Activated T-helper 1 cell treated with anti-CD3 and anti-CD28 coated beads, Interleukin-12 subunit alpha, Interleukin-12 subunit beta, Interleukin-2, Interleukin-4 antibody, amounts not matched to agents 30 ng/mL and 10 ng/mL and 1 ng/mL, durations not matched to agents 14 hours and 24 hours and 36 hours (primary cell): ENCODE measurements at regions of chr2 and their contacts with region 1.

Region 1: GRCh38 chr2:43595603-43596412 is at the start of gene THADA:
- DNase-seq: peak; percentile 97
- H3K4me3 Mint-ChIP-seq: peak within 1 kb of the TSS; percentile 96
- H3K27ac Mint-ChIP-seq: peak within 1 kb of the TSS; percentile 98
- H3K4me1 Mint-ChIP-seq: peaks cover 42% of the 10 kb centered on the region
- H3K27me3 Mint-ChIP-seq: peaks cover 2% of the 10 kb centered on the region
- total RNA-seq, gene THADA: 49.8 and 51.7 TPM in 2 replicates

Region 2: GRCh38 chr2:43293744-43294695 is 301.8 kb before region 1 on chr2:
- intact Hi-C with region 1: loop called (anchors 5 kb)
- DNase-seq: peak; percentile 66
- H3K4me3 Mint-ChIP-seq: peak overlapping the region; percentile 35
- H3K27ac Mint-ChIP-seq: peak overlapping the region; percentile 77
- H3K4me1 Mint-ChIP-seq: peaks cover 34% of the 10 kb centered on the region
- H3K27me3 Mint-ChIP-seq: no peaks in the 10 kb centered on the region

Region 3: GRCh38 chr2:43569921-43570320 is 25.9 kb before region 1 on chr2:
- intact Hi-C with region 1: loop called (anchors 2 kb)
- DNase-seq: no peak
- H3K4me3 Mint-ChIP-seq: peak overlapping the region; percentile 67
- H3K27ac Mint-ChIP-seq: peak overlapping the region; percentile 79
- H3K4me1 Mint-ChIP-seq: peaks cover 59% of the 10 kb centered on the region
- H3K27me3 Mint-ChIP-seq: no peaks in the 10 kb centered on the region

Region 4: DNA sequence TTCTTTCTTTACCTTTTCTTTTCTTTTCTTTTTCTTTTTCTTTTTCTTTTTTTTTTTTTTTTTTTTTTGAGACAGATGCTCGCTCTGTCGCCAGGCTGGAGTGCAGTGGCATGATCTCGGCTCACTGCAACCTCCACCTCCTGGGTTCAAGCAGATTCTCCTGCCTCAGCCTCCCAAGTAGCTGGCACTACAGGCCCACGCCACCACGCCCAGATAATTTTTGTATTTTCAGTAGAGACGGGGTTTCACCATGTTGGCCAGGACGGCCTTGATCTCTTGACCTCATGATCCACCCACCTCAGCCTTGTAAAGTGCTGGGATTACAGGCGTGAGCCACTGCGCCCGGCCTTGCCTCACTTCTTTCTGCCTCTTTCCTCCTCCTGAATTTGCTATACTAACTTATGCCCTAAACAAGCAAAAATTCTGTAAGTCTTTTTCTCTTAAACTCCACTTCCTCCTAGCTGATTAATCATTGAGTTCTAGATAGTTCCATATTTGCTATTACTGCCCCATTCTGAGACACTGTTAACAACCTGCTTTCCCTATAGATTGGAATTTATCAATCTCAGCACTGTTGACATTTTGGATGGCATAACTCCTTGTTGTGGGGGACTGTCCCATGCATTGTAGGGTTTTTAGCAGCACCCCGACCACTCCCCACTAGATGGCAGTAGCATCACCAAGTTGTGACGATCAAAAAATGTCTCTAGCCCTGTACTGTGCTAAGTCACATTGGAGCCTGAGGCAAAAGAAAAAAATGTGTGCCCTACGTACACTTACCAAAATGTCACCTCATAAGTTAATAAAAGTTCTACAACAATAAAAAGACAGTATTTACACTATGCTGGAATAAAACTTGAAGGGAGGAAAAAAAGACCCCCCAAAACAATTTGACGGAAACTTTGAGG is 16.4 kb after region 1 on chr2:
- intact Hi-C with region 1: loop called (anchors 1 kb)
- DNase-seq: peak; percentile 60
- H3K4me3 Mint-ChIP-seq: no peak overlapping the region
- H3K27ac Mint-ChIP-seq: no peak overlapping the region
- H3K4me1 Mint-ChIP-seq: peaks cover 5% of the 10 kb centered on the region
- H3K27me3 Mint-ChIP-seq: peaks cover 9% of the 10 kb centered on the region

Region 5: DNA sequence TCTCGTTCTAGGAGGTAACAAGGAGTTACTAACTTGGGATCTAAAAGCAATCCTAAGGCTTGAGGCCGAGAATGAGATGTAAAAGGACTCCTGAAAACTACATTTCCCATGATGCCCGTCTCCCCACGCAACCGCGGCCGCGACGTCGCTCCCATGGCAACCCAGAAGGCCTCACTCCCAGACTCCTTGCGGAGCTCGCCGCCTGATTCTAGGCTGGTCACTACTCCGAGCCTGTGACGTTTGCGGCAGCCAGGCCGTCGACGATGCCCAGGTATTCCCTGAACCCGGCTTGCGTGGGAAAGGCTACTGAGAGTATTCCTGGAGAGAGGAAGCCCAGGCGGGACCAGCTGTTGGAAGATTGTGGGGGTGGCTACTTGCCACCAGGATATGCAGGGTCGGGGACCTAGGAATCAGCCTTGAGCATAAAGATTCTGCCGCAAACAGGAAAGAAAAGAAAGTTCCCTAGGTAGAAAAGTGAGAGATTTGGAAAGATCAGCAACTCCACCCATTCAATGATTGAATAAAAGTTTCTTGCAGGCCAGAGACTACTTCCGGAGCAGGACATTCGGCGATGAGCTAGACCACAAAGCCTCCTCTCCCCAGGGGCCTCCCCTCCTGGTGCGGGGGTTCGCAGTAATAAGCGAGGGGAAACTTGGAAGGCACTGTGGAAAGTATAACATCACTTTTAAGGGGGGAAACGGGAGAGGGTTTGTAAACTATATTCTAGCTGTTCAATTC is 178.2 kb after region 1 on chr2 and contains the start of gene DYNC2LI1:
- intact Hi-C with region 1: loop called (anchors 1 kb)
- DNase-seq: peak; percentile 71
- H3K4me3 Mint-ChIP-seq: peak within 1 kb of the TSS; percentile 92
- H3K27ac Mint-ChIP-seq: peak within 1 kb of the TSS; percentile 79
- H3K4me1 Mint-ChIP-seq: peaks cover 19% of the 10 kb centered on the region
- H3K27me3 Mint-ChIP-seq: peaks cover 3% of the 10 kb centered on the region
- total RNA-seq, gene DYNC2LI1: 6.2 and 6.6 TPM in 2 replicates

Region 6: DNA sequence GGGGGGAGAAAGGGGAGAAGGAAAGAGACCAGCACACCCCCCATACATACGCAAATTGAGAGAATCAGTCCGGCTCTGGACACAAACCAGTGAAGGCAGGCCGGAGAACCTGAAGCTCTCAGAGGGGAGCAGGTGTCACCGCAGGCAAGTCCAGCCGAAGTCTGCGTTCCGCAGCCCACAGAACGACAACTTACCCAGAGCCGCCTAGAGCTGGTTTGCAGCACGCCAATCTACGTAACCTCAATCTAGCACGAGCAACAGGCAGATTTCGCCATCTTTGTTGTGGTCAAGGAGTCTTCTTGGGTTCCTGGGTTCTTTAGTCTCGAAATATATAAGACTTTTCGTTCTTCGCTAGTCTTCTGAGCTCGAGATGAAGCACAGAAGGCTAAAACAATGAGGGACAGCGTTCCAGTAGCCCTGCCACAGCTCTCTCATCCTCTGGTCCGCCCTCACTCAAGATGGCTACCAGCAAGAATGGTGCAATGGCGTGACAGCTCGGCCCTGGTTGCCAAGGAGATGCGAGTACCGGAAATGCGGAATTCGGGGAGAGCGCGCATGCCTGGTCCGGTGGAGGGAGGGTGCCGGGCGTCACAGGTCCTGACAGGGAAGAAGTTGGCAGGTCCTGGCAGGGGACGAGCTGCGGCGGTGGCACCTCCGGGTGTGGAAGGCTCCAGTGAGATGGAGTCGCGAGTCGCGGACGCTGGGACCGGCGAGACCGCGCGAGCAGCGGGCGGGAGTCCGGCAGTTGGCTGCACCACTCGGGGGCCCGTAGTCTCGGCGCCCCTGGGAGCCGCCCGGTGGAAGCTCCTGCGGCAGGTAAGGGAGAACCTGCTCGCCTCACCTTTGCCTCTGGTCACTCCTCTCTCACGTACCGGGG is 765.8 kb after region 1 on chr2 and contains the starts of genes CAMKMT and PREPL:
- intact Hi-C with region 1: loop called (anchors 1 kb)
- DNase-seq: peak; percentile 97
- H3K4me3 Mint-ChIP-seq: peak within 1 kb of the TSS; percentile 99
- H3K27ac Mint-ChIP-seq: peak within 1 kb of the TSS; percentile 100
- H3K4me1 Mint-ChIP-seq: peaks cover 46% of the 10 kb centered on the region
- H3K27me3 Mint-ChIP-seq: no peaks in the 10 kb centered on the region
- total RNA-seq, gene CAMKMT: 13.4 and 14.2 TPM in 2 replicates
- total RNA-seq, gene PREPL: 29.4 and 30.5 TPM in 2 replicates